ENCODE measurements at regions of chr2 and their contacts with region 1.

Region 1: GRCh38 chr2:201231781-201232466 is 28.4 kb upstream of the CASP8 start:
- DNase-seq: peak; percentile 97
- ATAC-seq: peak; percentile 32
- H3K4me3 ChIP-seq: no peak overlapping the region
- H3K27ac ChIP-seq: peak overlapping the region; percentile 32
- H3K4me1 ChIP-seq: peaks cover 39% of the 10 kb centered on the region
- H3K27me3 ChIP-seq: no peaks in the 10 kb centered on the region
- CTCF ChIP-seq: peak; percentile 94

Region 2: DNA sequence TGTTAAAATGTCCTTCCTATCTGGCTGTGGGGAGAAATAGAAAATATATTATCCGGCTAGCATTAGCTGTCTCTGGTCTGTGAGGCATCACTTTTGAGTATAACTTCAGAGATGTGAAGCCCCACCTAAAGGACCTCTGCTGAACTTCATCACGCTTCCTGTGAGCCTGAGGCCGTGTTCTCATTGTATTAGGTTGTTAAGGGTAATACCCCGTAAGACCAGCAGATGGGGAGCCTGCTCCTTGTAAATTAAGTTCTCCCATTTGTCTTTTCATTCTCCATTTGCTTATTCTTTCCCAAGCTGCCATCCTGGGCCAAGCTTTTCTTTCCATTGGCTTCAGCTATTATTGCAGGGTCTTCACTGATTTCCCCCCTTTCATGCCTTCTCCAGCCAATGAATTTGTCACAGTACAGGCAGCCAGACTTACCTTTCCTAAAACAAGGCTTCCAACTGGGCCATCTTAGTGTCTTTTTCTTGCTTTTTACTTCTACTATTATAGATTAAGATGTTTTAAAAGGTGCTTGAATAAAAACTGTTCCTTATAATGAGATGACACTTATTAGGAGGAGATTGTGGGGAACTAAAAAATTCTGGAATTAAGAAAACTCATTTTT is 330.4 kb before region 1 on chr2:
- CTCF ChIA-PET with region 1: no interaction called
- POLR2A ChIA-PET with region 1: no interaction called
- intact Hi-C with region 1: loop called (anchors 1 kb)
- DNase-seq: peak; percentile 94
- ATAC-seq: peak; percentile 92
- H3K4me3 ChIP-seq: no peak overlapping the region
- H3K27ac ChIP-seq: no peak overlapping the region
- H3K4me1 ChIP-seq: no peaks in the 10 kb centered on the region
- H3K27me3 ChIP-seq: no peaks in the 10 kb centered on the region
- CTCF ChIP-seq: peak; percentile 86

Region 3: GRCh38 chr2:201100497-201100896 is 131.4 kb before region 1 on chr2:
- CTCF ChIA-PET with region 1: no interaction called
- POLR2A ChIA-PET with region 1: interaction called, 11 read pairs
- intact Hi-C with region 1: no loop called
- DNase-seq: no peak
- ATAC-seq: no peak
- H3K4me3 ChIP-seq: no peak overlapping the region
- H3K27ac ChIP-seq: no peak overlapping the region
- H3K4me1 ChIP-seq: no peaks in the 10 kb centered on the region
- H3K27me3 ChIP-seq: no peaks in the 10 kb centered on the region
- CTCF ChIP-seq: no peak

Region 4: GRCh38 chr2:201257956-201258665 is 26.2 kb after region 1 on chr2:
- CTCF ChIA-PET with region 1: no interaction called
- POLR2A ChIA-PET with region 1: interaction called, 4 read pairs
- intact Hi-C with region 1: loop called (anchors 1 kb)
- DNase-seq: peak; percentile 90
- ATAC-seq: peak; percentile 80
- H3K4me3 ChIP-seq: peak overlapping the region; percentile 81
- H3K27ac ChIP-seq: peak overlapping the region; percentile 95
- H3K4me1 ChIP-seq: peaks cover 30% of the 10 kb centered on the region
- H3K27me3 ChIP-seq: no peaks in the 10 kb centered on the region
- CTCF ChIP-seq: 0 out of 2 replicates have a peak, but pooled peaks have one; percentile 21

Region 5: DNA sequence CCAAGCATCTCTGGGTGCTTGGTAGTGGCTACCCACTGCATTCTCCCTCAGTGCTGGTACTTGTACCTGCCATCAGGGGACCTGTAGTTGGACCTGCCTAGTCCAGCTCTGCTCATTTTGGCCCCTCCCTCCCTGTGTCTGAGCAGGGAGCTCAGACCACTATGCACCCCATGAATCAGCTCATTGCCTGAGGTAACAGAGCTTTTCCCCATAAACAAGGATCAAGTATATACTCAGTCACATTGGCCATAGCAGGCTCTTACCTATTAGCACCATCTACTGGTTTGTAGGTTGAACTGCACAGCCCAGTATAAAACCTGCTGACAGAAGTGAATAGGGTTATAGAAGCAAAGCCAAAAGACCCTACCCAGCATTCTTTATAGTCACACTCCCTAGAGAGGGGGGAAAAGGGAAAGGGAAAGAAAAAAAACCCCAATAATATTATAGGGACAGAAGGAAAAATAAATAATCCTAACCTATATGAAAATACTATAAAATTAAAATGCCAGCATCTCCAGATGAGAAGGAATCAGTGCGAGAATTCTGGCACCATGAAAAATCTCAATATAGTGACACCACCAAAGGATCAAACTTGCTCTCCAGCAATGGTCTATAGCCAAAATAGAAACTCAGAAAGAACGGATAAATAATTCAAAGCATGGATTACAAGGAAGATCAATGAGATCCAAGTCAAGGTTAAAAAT is 132.1 kb after region 1 on chr2:
- CTCF ChIA-PET with region 1: interaction called, 6 read pairs
- POLR2A ChIA-PET with region 1: no interaction called
- intact Hi-C with region 1: loop called (anchors 1 kb)
- DNase-seq: peak; percentile 84
- ATAC-seq: peak; percentile 86
- H3K4me3 ChIP-seq: no peak overlapping the region
- H3K27ac ChIP-seq: no peak overlapping the region
- H3K4me1 ChIP-seq: peaks cover 10% of the 10 kb centered on the region
- H3K27me3 ChIP-seq: no peaks in the 10 kb centered on the region
- CTCF ChIP-seq: peak; percentile 95

Region 6: GRCh38 chr2:201483342-201483741 is 251.4 kb after region 1 on chr2:
- CTCF ChIA-PET with region 1: no interaction called
- POLR2A ChIA-PET with region 1: no interaction called
- intact Hi-C with region 1: no loop called
- DNase-seq: no peak
- ATAC-seq: no peak
- H3K4me3 ChIP-seq: no peak overlapping the region
- H3K27ac ChIP-seq: no peak overlapping the region
- H3K4me1 ChIP-seq: no peaks in the 10 kb centered on the region
- H3K27me3 ChIP-seq: no peaks in the 10 kb centered on the region
- CTCF ChIP-seq: no peak

Region 7: GRCh38 chr2:201696151-201696659 is 464.3 kb after region 1 on chr2:
- CTCF ChIA-PET with region 1: no interaction called
- POLR2A ChIA-PET with region 1: no interaction called
- intact Hi-C with region 1: loop called (anchors 5 kb)
- DNase-seq: peak; percentile 83
- ATAC-seq: peak; percentile 44
- H3K4me3 ChIP-seq: no peak overlapping the region
- H3K27ac ChIP-seq: peak overlapping the region; percentile 79
- H3K4me1 ChIP-seq: peaks cover 50% of the 10 kb centered on the region
- H3K27me3 ChIP-seq: no peaks in the 10 kb centered on the region
- CTCF ChIP-seq: no peak